MCF 10A (cell line): ENCODE measurements at regions of chr10 and their contacts with region 1.

Region 1: GRCh38 chr10:27504007-27504807 is at the start of gene RAB18:
- DNase-seq: peak; percentile 98
- H3K4me3 Mint-ChIP-seq: peak within 1 kb of the TSS; percentile 99
- H3K27ac Mint-ChIP-seq: peak within 1 kb of the TSS; percentile 99
- H3K4me1 Mint-ChIP-seq: peaks cover 33% of the 10 kb centered on the region
- H3K27me3 Mint-ChIP-seq: no peaks in the 10 kb centered on the region
- CTCF ChIP-seq: no peak
- total RNA-seq, gene RAB18: 126 and 129 TPM in 2 replicates

Region 2: GRCh38 chr10:27241652-27242472 is 262.3 kb before region 1 on chr10:
- CTCF ChIA-PET with region 1: no interaction called
- POLR2A ChIA-PET with region 1: interaction called, 8 read pairs
- intact Hi-C with region 1: loop called (anchors 10 kb)
- DNase-seq: peak; percentile 95
- H3K4me3 Mint-ChIP-seq: peak overlapping the region; percentile 86
- H3K27ac Mint-ChIP-seq: peak overlapping the region; percentile 94
- H3K4me1 Mint-ChIP-seq: peaks cover 7% of the 10 kb centered on the region
- H3K27me3 Mint-ChIP-seq: no peaks in the 10 kb centered on the region
- CTCF ChIP-seq: no peak

Region 3: DNA sequence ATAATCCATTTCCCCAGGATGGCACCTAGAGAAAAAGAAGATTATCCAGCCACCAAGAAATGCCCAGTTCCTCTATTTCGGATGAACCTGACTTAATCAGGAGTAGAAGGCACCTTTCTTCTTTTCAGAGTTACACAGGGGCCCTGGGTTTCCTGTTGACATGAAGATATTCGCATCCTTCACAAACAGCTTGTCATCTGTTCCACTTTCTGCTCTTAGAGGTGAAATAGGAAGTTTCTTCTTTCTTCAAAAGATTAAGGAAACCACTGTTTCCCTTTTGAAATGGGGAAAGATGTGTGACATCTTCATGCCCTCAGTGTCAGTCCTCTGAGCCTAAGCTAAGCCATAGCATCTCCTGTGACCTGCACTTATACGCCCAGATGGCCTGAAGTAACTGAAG is 39.2 kb before region 1 on chr10:
- CTCF ChIA-PET with region 1: no interaction called
- POLR2A ChIA-PET with region 1: interaction called, 3 read pairs
- intact Hi-C with region 1: loop called (anchors 5 kb)
- DNase-seq: no peak
- H3K4me3 Mint-ChIP-seq: no peak overlapping the region
- H3K27ac Mint-ChIP-seq: no peak overlapping the region
- H3K4me1 Mint-ChIP-seq: no peaks in the 10 kb centered on the region
- H3K27me3 Mint-ChIP-seq: no peaks in the 10 kb centered on the region
- CTCF ChIP-seq: no peak

Region 4: DNA sequence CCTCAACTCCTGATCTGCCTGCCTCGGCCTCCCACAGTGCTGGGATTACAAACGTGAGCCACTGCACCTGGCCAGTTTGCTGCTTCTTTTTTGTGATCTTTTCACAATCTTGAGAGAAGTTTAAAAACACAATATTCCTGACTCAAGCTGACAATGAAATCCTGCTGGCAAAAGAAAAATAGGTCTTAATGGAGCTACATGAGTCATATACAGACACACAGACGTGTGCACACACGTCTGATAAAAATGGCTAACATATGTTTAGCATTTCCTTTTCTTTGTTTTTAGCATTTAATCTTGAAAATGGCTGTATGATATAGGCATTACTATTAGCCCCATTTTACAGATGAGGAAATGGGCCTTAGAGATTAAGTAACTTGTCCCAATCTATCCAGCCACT is 29.5 kb before region 1 on chr10:
- CTCF ChIA-PET with region 1: interaction called, 4 read pairs
- POLR2A ChIA-PET with region 1: interaction called, 24 read pairs
- intact Hi-C with region 1: no loop called
- DNase-seq: peak; percentile 63
- H3K4me3 Mint-ChIP-seq: no peak overlapping the region
- H3K27ac Mint-ChIP-seq: peak overlapping the region; percentile 80
- H3K4me1 Mint-ChIP-seq: peaks cover 12% of the 10 kb centered on the region
- H3K27me3 Mint-ChIP-seq: no peaks in the 10 kb centered on the region
- CTCF ChIP-seq: no peak

Region 5: DNA sequence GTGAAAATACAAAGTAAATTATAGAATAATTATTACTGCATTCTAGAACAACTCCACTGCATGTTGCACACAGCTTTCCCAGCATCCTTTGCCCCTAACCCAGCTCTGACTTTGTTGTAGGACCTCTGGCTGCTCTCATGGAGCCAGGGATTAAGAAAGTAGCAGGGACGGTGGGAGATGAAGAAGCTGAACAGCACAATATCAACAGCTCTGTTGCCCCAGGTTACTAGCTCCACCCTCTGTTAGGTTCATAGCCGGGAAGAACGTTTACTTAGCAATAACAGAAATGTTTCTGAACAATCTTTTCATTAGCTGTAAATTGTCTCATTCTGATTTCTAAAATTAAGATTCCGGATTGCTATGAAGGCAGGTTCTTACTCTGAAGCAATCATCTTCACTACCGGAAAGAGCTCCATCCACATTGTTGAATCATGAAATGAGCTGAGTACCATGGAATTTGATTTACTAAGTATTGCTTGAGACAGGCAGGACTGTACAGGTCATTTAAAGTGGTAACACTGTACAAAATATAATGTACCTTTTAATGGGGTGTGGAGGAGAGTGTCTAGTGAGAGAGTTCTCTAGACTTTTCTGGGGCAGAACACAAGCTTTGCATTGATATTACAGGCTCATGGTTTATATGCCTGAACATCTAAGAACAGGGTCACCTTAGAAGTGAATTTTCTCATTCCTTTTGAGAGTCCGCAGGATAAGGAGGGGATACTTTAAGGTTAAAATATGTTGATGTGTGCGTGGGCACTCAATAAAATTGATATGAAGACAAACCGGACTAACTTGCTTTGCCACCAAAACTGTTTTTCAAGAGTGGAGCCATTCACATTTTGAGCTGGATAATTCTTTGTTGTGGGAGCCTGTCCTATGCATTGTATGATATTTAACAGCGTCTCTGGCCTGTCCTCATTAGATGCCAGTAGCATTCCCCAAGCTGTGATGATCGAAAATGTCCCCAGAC is 20.9 kb before region 1 on chr10:
- CTCF ChIA-PET with region 1: interaction called, 16 read pairs
- POLR2A ChIA-PET with region 1: interaction called, 30 read pairs
- intact Hi-C with region 1: no loop called
- DNase-seq: peak; percentile 57
- H3K4me3 Mint-ChIP-seq: peak overlapping the region; percentile 59
- H3K27ac Mint-ChIP-seq: peak overlapping the region; percentile 87
- H3K4me1 Mint-ChIP-seq: peaks cover 30% of the 10 kb centered on the region
- H3K27me3 Mint-ChIP-seq: no peaks in the 10 kb centered on the region
- CTCF ChIP-seq: no peak

Region 6: GRCh38 chr10:27490807-27491206 is 13.4 kb before region 1 on chr10:
- CTCF ChIA-PET with region 1: interaction called, 16 read pairs
- POLR2A ChIA-PET with region 1: interaction called, 37 read pairs
- intact Hi-C with region 1: no loop called
- DNase-seq: peak; percentile 75
- H3K4me3 Mint-ChIP-seq: no peak overlapping the region
- H3K27ac Mint-ChIP-seq: peak overlapping the region; percentile 69
- H3K4me1 Mint-ChIP-seq: peaks cover 17% of the 10 kb centered on the region
- H3K27me3 Mint-ChIP-seq: no peaks in the 10 kb centered on the region
- CTCF ChIP-seq: no peak

Region 7: DNA sequence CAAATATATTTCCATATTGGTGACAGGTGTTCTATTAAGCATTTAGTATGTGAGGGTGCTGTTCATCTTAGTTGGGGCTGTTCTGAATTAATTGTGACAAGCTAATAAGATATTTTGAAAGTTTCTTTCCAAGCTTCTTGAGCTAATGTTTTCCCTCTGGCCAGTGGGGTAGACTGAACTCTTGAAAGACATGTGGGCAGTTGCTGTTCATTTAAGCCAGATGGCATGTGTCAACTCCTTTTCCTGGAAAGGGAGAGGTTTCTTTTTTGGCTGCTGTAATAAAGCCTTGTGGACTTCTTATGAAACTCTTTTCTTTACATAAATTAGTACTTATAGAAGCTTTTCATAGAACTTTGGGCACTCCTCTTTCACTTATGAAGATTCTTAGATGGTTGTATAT is 21.6 kb after region 1 on chr10:
- CTCF ChIA-PET with region 1: no interaction called
- POLR2A ChIA-PET with region 1: interaction called, 26 read pairs
- intact Hi-C with region 1: no loop called
- DNase-seq: peak; percentile 60
- H3K4me3 Mint-ChIP-seq: no peak overlapping the region
- H3K27ac Mint-ChIP-seq: no peak overlapping the region
- H3K4me1 Mint-ChIP-seq: peaks cover 51% of the 10 kb centered on the region
- H3K27me3 Mint-ChIP-seq: no peaks in the 10 kb centered on the region
- CTCF ChIP-seq: no peak

Region 8: GRCh38 chr10:27620430-27621397 is 116.5 kb after region 1 on chr10:
- CTCF ChIA-PET with region 1: no interaction called
- POLR2A ChIA-PET with region 1: no interaction called
- intact Hi-C with region 1: no loop called
- DNase-seq: no peak
- H3K4me3 Mint-ChIP-seq: peak overlapping the region; percentile 48
- H3K27ac Mint-ChIP-seq: peak overlapping the region; percentile 52
- H3K4me1 Mint-ChIP-seq: peaks cover 15% of the 10 kb centered on the region
- H3K27me3 Mint-ChIP-seq: no peaks in the 10 kb centered on the region
- CTCF ChIP-seq: no peak